T-cell (primary cell): ENCODE measurements at regions of chr7 and their contacts with region 1.

Region 1: GRCh38 chr7:16583834-16584233 is 57.2 kb downstream of the LRRC72 start:
- DNase-seq: no peak
- ATAC-seq: no peak
- H3K4me3 ChIP-seq: no peak overlapping the region
- H3K4me3 Mint-ChIP-seq: no peak overlapping the region
- H3K27ac ChIP-seq: no peak overlapping the region
- H3K27ac Mint-ChIP-seq: no peak overlapping the region
- H3K4me1 ChIP-seq: no peaks in the 10 kb centered on the region
- H3K4me1 Mint-ChIP-seq: peaks cover 0 to 1% (median 0%) of the 10 kb centered on the region in 3 donors
- H3K27me3 ChIP-seq: peaks cover 0 to 22% of the 10 kb centered on the region in 2 experiments
- H3K27me3 Mint-ChIP-seq: peaks cover 5 to 7% of the 10 kb centered on the region in 2 donors

Region 2: GRCh38 chr7:17985473-17986239 is 1401.8 kb after region 1 on chr7:
- CTCF ChIA-PET with region 1: no interaction called
- POLR2A ChIA-PET with region 1: interaction called in 1 of 2 experiments, 11 read pairs
- DNase-seq: no peak
- ATAC-seq: no peak
- H3K4me3 ChIP-seq: no peak overlapping the region
- H3K4me3 Mint-ChIP-seq: no peak overlapping the region
- H3K27ac ChIP-seq: no peak overlapping the region
- H3K27ac Mint-ChIP-seq: no peak overlapping the region
- H3K4me1 ChIP-seq: no peaks in the 10 kb centered on the region
- H3K4me1 Mint-ChIP-seq: no peaks in the 10 kb centered on the region
- H3K27me3 ChIP-seq: no peaks in the 10 kb centered on the region
- H3K27me3 Mint-ChIP-seq: peaks cover 0 to 3% of the 10 kb centered on the region in 2 donors